Gastrocnemius medialis (tissue), 4 donors: ENCODE measurements at regions of chr13 and their contacts with region 1.

Region 1: DNA sequence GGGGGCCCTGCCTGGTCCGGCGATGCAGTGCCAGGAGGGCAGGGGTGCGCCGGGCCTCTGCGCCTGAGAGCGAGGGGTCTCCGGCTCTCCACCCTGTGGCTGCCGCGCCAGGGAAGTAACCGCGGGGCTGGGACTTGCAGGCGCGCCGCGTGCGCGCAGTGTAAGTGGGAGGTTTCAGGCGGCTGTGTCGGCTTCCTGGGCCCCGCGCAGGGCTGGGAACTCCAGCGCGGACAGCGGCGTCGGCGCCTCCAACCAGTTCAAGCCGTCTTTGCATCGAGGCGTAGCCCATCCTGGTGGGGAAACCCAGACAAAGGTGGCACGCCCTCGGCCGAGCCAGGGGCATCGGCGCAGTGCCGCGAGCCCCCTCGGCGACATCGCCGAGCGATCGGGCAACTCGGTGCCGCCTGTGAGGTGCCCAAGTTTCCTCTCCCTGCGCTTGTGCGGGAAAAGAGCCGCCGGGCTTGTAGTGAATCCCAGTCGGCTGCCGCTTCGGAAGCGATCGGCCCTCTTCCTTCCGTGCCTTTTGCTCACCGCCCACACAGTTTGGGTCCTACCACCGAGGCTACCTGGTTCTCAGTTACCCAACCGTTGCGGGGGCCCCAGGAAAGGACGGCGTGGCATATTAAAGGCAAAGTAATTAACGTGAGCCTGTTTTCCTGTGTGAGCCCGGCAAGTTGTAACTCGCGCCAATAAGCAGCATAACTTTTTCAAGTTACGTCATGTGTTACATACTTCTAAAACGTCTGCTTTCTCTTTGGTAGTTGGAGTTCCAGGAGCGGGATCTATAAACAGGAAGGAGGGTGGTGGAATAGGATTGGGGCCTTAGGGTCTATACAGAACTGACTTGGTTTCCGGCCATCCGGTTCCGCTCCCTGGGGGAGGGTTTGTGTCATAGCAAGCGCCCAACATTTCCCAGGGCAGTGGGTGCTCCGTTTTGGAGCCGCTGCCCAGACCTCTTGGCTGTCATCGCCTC is 1.2 kb downstream of the LRCH1 start:
- DNase-seq: peak; percentile 23 to 30
- ATAC-seq: peak; percentile 48 to 57
- H3K4me3 ChIP-seq: peak overlapping the region; percentile 60 to 98 (median 88)
- H3K27ac ChIP-seq: peak overlapping the region; percentile 72 to 87 (median 83)
- H3K4me1 ChIP-seq: peaks cover 14 to 23% of the 10 kb centered on the region in 2 donors
- H3K27me3 ChIP-seq: no peaks in the 10 kb centered on the region
- CTCF ChIP-seq: peak in 3 of 5 experiments; percentile 14 to 37 (median 19)
- POLR2A ChIP-seq: peak in 1 of 2 donors; percentile 34

Region 2: DNA sequence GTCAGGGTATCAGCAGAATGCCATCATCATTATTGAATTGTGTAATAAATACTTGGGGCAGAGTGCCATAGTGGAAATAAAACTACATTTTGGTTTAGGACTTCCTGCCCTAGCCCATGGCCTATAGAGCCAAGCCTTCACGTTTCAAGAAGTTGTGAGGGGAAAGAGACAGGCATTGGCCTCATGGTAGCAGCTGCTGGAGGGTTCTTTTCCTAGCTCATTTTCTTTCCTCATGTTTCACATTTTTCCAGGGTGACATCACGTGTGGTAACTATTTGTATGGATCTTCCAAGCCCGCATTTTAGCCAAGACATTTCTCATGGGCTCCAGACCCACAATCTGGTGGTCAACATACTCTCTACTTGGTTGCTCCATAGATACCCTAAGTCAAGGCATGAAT is 79.2 kb after region 1 on chr13:
- in situ Hi-C with region 1: no loop called
- intact Hi-C with region 1: no loop called
- DNase-seq: no peak
- ATAC-seq: no peak
- H3K4me3 ChIP-seq: no peak overlapping the region
- H3K27ac ChIP-seq: no peak overlapping the region
- H3K4me1 ChIP-seq: peaks cover 9 to 25% of the 10 kb centered on the region in 2 donors
- H3K27me3 ChIP-seq: no peaks in the 10 kb centered on the region
- CTCF ChIP-seq: no peak
- POLR2A ChIP-seq: no peak

Region 3: DNA sequence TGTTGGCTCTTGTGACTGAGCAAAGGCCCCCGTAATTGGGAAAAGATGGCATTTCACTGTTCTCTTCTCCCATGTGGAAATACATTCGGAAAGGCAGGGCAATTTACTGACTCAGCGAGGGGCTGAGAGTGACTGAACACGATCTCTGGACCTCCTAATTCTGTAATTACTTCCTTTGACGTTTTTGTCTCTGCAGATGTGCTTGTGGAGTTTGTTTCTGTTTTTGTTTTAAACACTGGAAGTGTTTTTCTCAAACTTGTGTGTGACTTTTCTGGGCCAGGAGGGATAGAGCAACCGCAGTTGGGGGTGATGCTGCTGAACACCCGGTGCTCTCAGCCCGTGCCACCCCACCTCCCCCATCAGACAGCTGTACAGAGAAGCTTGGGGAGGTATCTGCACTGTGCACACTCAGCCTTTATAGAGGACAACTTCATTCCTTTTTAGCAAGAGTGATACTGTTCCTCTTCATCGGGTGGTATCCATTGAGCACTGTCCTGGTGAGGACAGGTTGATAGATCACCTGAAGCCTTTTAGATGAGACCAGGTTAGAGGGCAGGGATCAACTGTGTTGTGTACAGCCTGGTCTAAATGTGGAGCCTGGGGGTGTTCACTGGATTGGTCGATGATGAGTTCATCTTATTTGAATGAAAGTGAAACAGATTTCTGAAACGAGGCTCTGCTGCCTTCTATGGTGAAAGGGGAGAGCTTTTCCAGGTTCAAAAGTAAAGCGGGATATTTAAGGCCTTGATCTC is 125.4 kb after region 1 on chr13:
- in situ Hi-C with region 1: no loop called
- intact Hi-C with region 1: loop called (anchors 5 kb)
- DNase-seq: no peak
- ATAC-seq: peak; percentile 66 to 73
- H3K4me3 ChIP-seq: peak overlapping the region; percentile 24 to 41 (median 34)
- H3K27ac ChIP-seq: peak overlapping the region; percentile 53 to 72 (median 62)
- H3K4me1 ChIP-seq: peaks cover 4 to 11% of the 10 kb centered on the region in 2 donors
- H3K27me3 ChIP-seq: no peaks in the 10 kb centered on the region
- CTCF ChIP-seq: no peak
- POLR2A ChIP-seq: peak in 1 of 2 donors; percentile 25

Region 4: DNA sequence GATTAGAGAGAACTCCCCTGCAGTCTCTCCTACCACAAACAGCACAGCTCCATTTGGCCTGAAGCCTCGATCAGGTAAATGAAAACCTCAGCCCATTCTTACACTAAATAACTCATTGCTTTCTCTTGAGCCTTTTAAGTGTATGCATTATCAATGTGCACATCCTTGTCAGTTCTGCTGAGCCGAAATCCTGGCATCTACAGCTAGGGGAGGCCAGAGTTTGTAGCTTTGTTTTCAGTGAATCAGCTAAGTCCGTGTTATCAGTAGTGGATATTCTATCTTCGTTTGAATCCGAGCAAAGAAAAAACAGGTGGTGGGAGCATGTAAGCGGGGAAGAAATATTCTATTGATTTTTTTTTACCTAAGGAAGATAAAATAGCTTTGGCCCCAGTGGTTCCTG is 158.4 kb after region 1 on chr13:
- in situ Hi-C with region 1: loop called in 1 of 4 experiments (anchors 10 kb)
- intact Hi-C with region 1: no loop called
- DNase-seq: no peak
- ATAC-seq: no peak
- H3K4me3 ChIP-seq: no peak overlapping the region
- H3K27ac ChIP-seq: no peak overlapping the region
- H3K4me1 ChIP-seq: no peaks in the 10 kb centered on the region
- H3K27me3 ChIP-seq: no peaks in the 10 kb centered on the region
- CTCF ChIP-seq: no peak
- POLR2A ChIP-seq: no peak

Region 5: DNA sequence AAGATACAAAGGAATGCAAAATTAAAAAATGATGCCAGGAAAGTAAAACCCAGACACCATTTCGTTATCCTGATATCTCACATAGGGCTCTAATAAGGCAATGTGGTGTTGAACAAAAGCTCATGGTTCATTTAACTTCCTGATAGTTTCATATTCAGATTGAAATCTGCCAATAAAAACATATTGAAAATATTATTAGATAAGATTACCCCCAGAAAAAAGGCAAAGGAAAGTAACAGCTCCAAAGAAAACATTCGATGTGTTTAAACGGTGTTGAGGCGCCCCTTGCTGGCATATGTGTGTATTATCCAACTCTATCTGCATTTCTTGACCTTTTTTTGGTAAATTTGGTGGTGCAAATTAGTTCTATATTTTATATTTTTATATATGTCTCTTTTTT is 166.9 kb after region 1 on chr13:
- in situ Hi-C with region 1: loop called (anchors 5 to 10 kb)
- intact Hi-C with region 1: loop called (anchors 1 kb)
- DNase-seq: peak in 1 of 2 donors; percentile 8
- ATAC-seq: no peak
- H3K4me3 ChIP-seq: no peak overlapping the region
- H3K27ac ChIP-seq: no peak overlapping the region
- H3K4me1 ChIP-seq: no peaks in the 10 kb centered on the region
- H3K27me3 ChIP-seq: no peaks in the 10 kb centered on the region
- CTCF ChIP-seq: peak; percentile 31 to 70 (median 61)
- POLR2A ChIP-seq: no peak

Region 6: GRCh38 chr13:46796515-46797474 is 242.6 kb after region 1 on chr13 and contains the start of gene ESD:
- in situ Hi-C with region 1: no loop called
- intact Hi-C with region 1: loop called (anchors 5 kb)
- DNase-seq: peak; percentile 85 to 91
- ATAC-seq: peak; percentile 93 to 95
- H3K4me3 ChIP-seq: peak within 1 kb of the TSS; percentile 72 to 90 (median 79)
- H3K27ac ChIP-seq: peak within 1 kb of the TSS; percentile 86 to 94 (median 92)
- H3K4me1 ChIP-seq: peaks cover 25 to 35% of the 10 kb centered on the region in 2 donors
- H3K27me3 ChIP-seq: no peaks in the 10 kb centered on the region
- CTCF ChIP-seq: no peak
- POLR2A ChIP-seq: peak; percentile 52 to 86
- total RNA-seq, gene ESD: 70.7 to 100 (median 94.3) TPM

Region 7: DNA sequence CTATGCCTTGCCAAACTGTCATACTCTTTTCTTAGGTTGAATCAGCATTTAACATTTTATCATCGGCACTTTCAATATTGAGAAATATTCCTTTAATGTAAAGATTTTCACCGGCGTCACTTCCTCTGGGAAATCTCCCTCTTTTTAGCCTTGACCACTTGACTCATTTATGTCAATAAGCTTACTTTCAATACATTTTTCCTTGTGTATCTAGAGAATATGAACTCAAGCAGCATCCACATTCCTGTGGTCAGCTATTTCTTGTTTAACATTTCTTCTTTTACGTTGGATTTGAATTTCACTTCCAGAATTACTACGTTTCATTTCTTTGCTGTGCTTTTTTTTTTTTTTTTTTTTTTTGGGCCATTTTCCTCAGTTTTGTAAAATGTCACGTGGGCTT is 613.9 kb after region 1 on chr13:
- in situ Hi-C with region 1: no loop called
- intact Hi-C with region 1: no loop called
- DNase-seq: no peak
- ATAC-seq: no peak
- H3K4me3 ChIP-seq: no peak overlapping the region
- H3K27ac ChIP-seq: no peak overlapping the region
- H3K4me1 ChIP-seq: no peaks in the 10 kb centered on the region
- H3K27me3 ChIP-seq: no peaks in the 10 kb centered on the region
- CTCF ChIP-seq: no peak
- POLR2A ChIP-seq: no peak